IMR-90 (cell line): ENCODE measurements at regions of chr1 and their contacts with region 1.

Region 1: DNA sequence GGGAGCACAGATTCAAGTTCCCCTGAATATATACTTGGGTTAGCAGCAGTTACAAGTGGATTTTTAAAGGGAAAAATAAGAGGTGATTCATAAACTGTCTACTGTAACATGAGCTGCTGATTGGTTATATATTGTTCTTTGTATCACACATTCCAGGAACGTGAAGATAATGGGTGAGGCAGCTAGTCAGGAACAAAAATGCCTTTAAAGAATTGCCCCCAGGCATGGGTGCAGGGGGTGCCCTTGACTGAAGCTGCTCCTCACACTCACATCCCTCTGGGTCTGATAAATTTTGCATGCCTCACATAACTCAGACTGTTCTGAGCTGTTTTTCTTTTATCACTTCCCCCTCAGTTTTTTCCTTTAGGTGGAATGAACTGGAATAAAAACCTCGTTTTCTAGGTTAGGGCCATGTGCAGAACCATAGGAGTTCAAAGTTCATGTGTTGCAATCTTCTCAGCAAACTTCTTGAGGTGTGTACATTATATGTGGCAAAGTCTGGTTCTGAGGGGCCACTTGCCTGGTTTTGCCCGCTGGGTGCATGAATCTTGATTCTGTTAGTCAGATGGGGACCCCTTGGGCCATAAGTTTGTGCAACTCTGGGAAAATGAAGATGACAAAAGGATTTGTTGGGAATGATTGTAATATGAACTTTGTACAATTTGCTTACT is 21.1 kb downstream of the TBX19 start:
- DNase-seq: peak; percentile 61
- ATAC-seq: peak; percentile 88
- H3K4me3 ChIP-seq: no peak overlapping the region
- H3K27ac ChIP-seq: no peak overlapping the region
- H3K4me1 ChIP-seq: peaks cover 4% of the 10 kb centered on the region
- H3K27me3 ChIP-seq: no peaks in the 10 kb centered on the region
- CTCF ChIP-seq: no peak
- POLR2A ChIP-seq: no peak
- RAD21 ChIP-seq: no peak

Region 2: GRCh38 chr1:167207940-167208623 is 1093.7 kb before region 1 on chr1:
- CTCF ChIA-PET with region 1: no interaction called
- POLR2A ChIA-PET with region 1: interaction called, 13 read pairs
- dilution Hi-C with region 1: no loop called
- in situ Hi-C with region 1: no loop called
- intact Hi-C with region 1: no loop called
- DNase-seq: no peak
- ATAC-seq: no peak
- H3K4me3 ChIP-seq: no peak overlapping the region
- H3K27ac ChIP-seq: no peak overlapping the region
- H3K4me1 ChIP-seq: no peaks in the 10 kb centered on the region
- H3K27me3 ChIP-seq: peaks cover 12% of the 10 kb centered on the region
- CTCF ChIP-seq: peak; percentile 20; the same call in 1 of the 2 replicates
- POLR2A ChIP-seq: no peak
- RAD21 ChIP-seq: no peak

Region 3: GRCh38 chr1:168065506-168065905 is 236.3 kb before region 1 on chr1:
- CTCF ChIA-PET with region 1: no interaction called
- POLR2A ChIA-PET with region 1: no interaction called
- dilution Hi-C with region 1: no loop called
- in situ Hi-C with region 1: no loop called
- intact Hi-C with region 1: no loop called
- DNase-seq: no peak
- ATAC-seq: no peak
- H3K4me3 ChIP-seq: no peak overlapping the region
- H3K27ac ChIP-seq: no peak overlapping the region
- H3K4me1 ChIP-seq: no peaks in the 10 kb centered on the region
- H3K27me3 ChIP-seq: no peaks in the 10 kb centered on the region
- CTCF ChIP-seq: no peak
- POLR2A ChIP-seq: no peak
- RAD21 ChIP-seq: no peak

Region 4: GRCh38 chr1:168342572-168343280 is 40.9 kb after region 1 on chr1:
- CTCF ChIA-PET with region 1: no interaction called
- POLR2A ChIA-PET with region 1: no interaction called
- dilution Hi-C with region 1: no loop called
- in situ Hi-C with region 1: no loop called
- intact Hi-C with region 1: no loop called
- DNase-seq: peak; percentile 91
- ATAC-seq: peak; percentile 98
- H3K4me3 ChIP-seq: no peak overlapping the region
- H3K27ac ChIP-seq: no peak overlapping the region
- H3K4me1 ChIP-seq: no peaks in the 10 kb centered on the region
- H3K27me3 ChIP-seq: peaks cover 2% of the 10 kb centered on the region
- CTCF ChIP-seq: peak; percentile 86
- POLR2A ChIP-seq: no peak
- RAD21 ChIP-seq: peak; percentile 75